ENCODE measurements at regions of chr4 and their contacts with region 1.

Region 1: DNA sequence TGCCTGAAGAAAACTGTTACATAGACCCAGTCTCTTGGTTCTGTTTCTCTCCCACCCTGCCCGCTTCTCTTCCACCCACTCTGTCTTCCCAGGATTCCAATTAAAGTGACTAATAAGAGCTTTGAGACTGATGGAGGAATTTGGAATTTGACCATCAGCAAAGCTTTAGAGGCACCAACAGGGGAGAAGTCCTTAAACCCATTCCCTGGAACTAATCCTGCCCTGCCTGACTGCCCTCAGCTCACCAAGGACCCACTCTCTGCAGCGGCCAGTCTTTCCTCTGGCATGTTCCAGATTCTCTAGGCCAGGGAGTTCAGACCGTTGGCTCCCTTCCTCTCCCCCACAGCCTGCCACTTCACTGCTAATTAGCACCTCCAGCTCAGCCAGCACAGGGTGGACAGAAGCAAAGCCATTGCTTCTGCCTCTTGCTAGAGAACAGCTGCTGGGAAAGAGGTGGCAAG is 23.9 kb downstream of the SCD5 start:
- DNase-seq: no peak
- H3K4me3 ChIP-seq: no peak overlapping the region
- H3K27ac ChIP-seq: no peak overlapping the region
- H3K4me1 ChIP-seq: peaks cover 12% of the 10 kb centered on the region; the same call in 1 of the 2 replicates
- H3K27me3 ChIP-seq: no peaks in the 10 kb centered on the region
- CTCF ChIP-seq: no peak

Region 2: DNA sequence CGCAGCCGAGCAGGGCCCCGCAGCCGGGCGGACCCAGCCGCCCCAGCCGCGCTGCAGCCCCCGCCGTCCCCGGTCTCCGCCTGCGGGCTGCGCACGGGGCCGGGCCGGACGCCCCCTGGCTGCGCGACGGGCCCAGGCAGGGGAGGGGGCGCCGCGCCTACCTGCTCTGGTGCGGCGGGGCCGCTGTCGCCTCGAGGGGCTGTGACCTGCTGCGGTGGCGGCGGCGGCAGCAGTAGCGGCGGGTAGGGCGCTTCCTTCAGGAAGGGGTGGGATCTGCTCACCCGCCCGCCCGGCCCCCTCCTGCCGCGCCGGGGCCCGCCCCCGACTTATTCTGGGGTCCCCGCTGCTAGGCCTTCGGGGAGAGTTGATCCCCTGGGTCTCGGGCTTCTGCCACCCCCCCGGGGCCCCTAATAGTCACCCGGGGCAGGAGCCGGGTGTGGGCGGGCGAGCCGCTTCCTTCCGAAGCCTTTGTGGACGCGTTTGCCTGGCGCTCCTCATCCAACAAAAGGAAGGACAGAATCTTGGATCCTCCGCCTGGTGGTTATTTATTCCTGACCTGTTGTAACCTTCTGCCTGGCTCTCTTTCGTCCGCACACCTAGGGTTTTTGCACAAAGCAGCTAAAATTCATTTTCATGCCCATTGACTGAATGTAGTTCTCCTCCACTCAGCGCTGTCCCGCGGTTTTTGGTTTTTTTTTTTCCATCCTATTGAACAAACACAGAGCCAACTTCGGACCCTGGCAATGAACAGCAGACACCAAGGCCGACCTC is 212.8 kb before region 1 on chr4 and contains the start of gene TMEM150C:
- CTCF ChIA-PET with region 1: interaction called, 9 read pairs
- POLR2A ChIA-PET with region 1: interaction called, 14 read pairs
- intact Hi-C with region 1: no loop called
- DNase-seq: peak in 1 of 2 experiments; percentile 18
- H3K4me3 ChIP-seq: peak within 1 kb of the TSS; percentile 31; the same call in 1 of the 2 replicates
- H3K27ac ChIP-seq: no peak within 1 kb of the TSS
- H3K4me1 ChIP-seq: no peaks in the 10 kb centered on the region
- H3K27me3 ChIP-seq: 0 out of 2 replicates have a peak, but pooled peaks cover 6% of the 10 kb centered on the region
- CTCF ChIP-seq: no peak
- total RNA-seq, gene TMEM150C: 0.74 and 0.98 TPM in 2 replicates

Region 3: GRCh38 chr4:82704156-82704555 is 70.6 kb before region 1 on chr4:
- CTCF ChIA-PET with region 1: no interaction called
- POLR2A ChIA-PET with region 1: interaction called, 10 read pairs
- intact Hi-C with region 1: no loop called
- DNase-seq: no peak
- H3K4me3 ChIP-seq: no peak overlapping the region
- H3K27ac ChIP-seq: no peak overlapping the region
- H3K4me1 ChIP-seq: no peaks in the 10 kb centered on the region
- H3K27me3 ChIP-seq: no peaks in the 10 kb centered on the region
- CTCF ChIP-seq: no peak

Region 4: GRCh38 chr4:82745173-82745842 is 29.4 kb before region 1 on chr4:
- CTCF ChIA-PET with region 1: no interaction called
- POLR2A ChIA-PET with region 1: no interaction called
- intact Hi-C with region 1: loop called (anchors 1 kb)
- DNase-seq: peak; percentile 62 to 68
- H3K4me3 ChIP-seq: no peak overlapping the region
- H3K27ac ChIP-seq: peak overlapping the region; percentile 92
- H3K4me1 ChIP-seq: peaks cover 25% of the 10 kb centered on the region
- H3K27me3 ChIP-seq: no peaks in the 10 kb centered on the region
- CTCF ChIP-seq: no peak

Region 5: DNA sequence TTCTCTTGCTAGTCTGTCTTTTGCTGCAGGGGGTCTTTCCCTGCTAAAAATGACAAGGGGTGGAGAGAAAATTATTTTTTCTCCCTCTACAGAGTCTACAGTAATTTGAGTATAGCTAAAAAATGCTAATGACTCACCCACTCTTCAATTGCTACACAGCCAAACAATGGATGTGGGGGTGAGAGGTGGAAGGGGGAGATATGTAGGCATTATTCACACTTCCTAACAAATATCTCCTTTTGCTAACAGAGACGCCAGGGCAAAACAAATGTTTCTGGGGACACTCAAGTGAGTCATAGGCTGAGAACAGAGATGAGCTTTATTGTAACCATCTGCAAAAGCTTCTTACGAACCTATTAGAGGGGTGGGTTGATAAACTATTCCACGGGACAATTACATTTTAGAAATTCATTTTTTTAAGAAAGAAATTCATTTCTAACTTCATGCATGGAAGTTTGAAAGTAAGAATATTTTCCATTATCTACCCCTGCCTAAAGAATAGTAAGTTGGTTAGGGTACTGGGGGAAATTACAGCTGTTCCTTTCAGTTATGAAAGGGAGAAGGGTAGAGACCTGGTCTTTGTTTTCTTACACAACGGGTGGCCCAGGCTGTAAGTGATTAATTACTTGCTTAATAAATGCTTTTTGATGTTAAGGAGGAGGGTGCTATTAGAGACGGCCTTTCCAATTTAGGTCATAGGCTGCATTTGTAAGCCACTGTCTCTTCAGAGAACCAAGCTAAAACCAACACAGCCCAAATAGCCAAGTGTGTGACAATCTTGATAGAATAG is 11.1 kb after region 1 on chr4:
- CTCF ChIA-PET with region 1: no interaction called
- POLR2A ChIA-PET with region 1: no interaction called
- intact Hi-C with region 1: loop called (anchors 1 kb)
- DNase-seq: peak; percentile 53 to 90
- H3K4me3 ChIP-seq: peak overlapping the region; percentile 45; the same call in 1 of the 2 replicates
- H3K27ac ChIP-seq: peak overlapping the region; percentile 89
- H3K4me1 ChIP-seq: peaks cover 50% of the 10 kb centered on the region
- H3K27me3 ChIP-seq: no peaks in the 10 kb centered on the region
- CTCF ChIP-seq: no peak

Region 6: GRCh38 chr4:82842593-82842992 is 67.9 kb after region 1 on chr4:
- CTCF ChIA-PET with region 1: no interaction called
- POLR2A ChIA-PET with region 1: no interaction called
- intact Hi-C with region 1: no loop called
- DNase-seq: no peak
- H3K4me3 ChIP-seq: no peak overlapping the region
- H3K27ac ChIP-seq: no peak overlapping the region
- H3K4me1 ChIP-seq: no peaks in the 10 kb centered on the region
- H3K27me3 ChIP-seq: no peaks in the 10 kb centered on the region
- CTCF ChIP-seq: no peak; the same call in 1 of the 2 replicates

Region 7: DNA sequence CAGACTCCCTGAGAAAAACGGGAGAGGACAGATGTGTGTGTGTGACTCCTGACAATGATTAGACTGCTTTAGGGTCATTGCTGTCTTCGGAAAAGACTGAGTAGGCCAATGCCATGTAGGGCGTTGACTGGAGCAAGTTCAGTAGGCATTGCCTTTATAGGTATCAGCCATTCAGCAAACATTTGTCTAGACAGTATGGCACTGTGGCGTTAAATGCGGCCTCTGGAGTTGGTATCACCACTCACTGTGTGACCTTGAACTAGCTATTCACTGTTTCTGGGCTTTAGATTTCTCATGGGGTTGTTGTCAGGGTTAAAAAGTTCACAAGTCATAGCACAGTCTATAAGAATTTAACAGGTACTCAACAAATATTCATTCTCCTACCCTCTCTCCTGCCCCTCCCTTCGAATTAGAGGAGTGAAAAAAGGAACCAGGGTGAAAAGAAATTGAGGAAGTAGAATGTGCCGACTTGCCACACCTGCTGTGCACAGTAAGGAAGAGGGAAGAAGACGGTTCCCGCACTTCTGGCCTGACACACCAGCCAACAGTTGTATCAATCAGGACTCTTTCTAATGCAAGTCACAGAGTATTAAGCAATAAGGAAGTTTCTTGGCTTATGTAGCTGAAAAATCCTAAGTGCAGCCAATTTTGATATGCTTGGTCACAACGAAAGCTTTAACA is 423.0 kb after region 1 on chr4:
- CTCF ChIA-PET with region 1: no interaction called
- POLR2A ChIA-PET with region 1: no interaction called
- intact Hi-C with region 1: no loop called
- DNase-seq: no peak
- H3K4me3 ChIP-seq: no peak overlapping the region
- H3K27ac ChIP-seq: no peak overlapping the region
- H3K4me1 ChIP-seq: no peaks in the 10 kb centered on the region
- H3K27me3 ChIP-seq: no peaks in the 10 kb centered on the region
- CTCF ChIP-seq: no peak

Region 8: GRCh38 chr4:83618431-83618830 is 843.7 kb after region 1 on chr4:
- CTCF ChIA-PET with region 1: no interaction called
- POLR2A ChIA-PET with region 1: no interaction called
- intact Hi-C with region 1: loop called (anchors 5 kb)
- DNase-seq: peak; percentile 50 to 86
- H3K4me3 ChIP-seq: no peak overlapping the region
- H3K27ac ChIP-seq: peak overlapping the region; percentile 80
- H3K4me1 ChIP-seq: peaks cover 30% of the 10 kb centered on the region
- H3K27me3 ChIP-seq: no peaks in the 10 kb centered on the region
- CTCF ChIP-seq: no peak